ENCODE measurements at regions of chr17 and their contacts with region 1.

Region 1: GRCh38 chr17:74659898-74660297 is 36.4 kb upstream of the CD300E start:
- DNase-seq: no peak
- H3K4me3 ChIP-seq: no peak overlapping the region
- H3K27ac ChIP-seq: no peak overlapping the region
- H3K4me1 ChIP-seq: no peaks in the 10 kb centered on the region; a peak in 1 of 4 replicates
- H3K27me3 ChIP-seq: no peaks in the 10 kb centered on the region
- CTCF ChIP-seq: no peak
- EP300 ChIP-seq: no peak
- RAD21 ChIP-seq: no peak

Region 2: DNA sequence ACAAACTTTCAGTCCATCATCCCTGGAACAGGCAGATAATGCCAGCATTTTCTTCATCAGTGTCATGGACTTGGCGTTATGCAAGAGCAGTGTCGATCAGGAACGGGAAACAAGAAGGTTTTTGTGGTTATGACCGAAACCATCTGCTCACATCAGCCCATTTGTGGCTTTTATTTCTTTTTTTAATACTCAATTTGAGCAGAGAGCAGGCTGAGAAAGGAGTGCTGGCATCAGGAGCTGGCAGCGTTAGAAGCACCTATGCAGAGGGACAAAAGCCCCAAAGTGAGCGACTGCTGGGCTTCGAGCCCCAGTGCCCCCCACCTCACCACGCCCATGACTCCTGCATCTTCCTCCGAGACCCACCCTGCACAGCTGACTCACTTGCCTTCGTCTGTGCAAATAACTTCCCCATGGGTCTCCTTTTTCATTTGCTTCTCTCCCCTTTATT is 20.2 kb before region 1 on chr17:
- CTCF ChIA-PET with region 1: interaction called, 10 read pairs
- POLR2A ChIA-PET with region 1: no interaction called
- DNase-seq: no peak
- H3K4me3 ChIP-seq: no peak overlapping the region
- H3K27ac ChIP-seq: no peak overlapping the region
- H3K4me1 ChIP-seq: no peaks in the 10 kb centered on the region
- H3K27me3 ChIP-seq: no peaks in the 10 kb centered on the region
- CTCF ChIP-seq: no peak
- EP300 ChIP-seq: no peak
- RAD21 ChIP-seq: no peak

Region 3: GRCh38 chr17:74677558-74678466 is 17.9 kb after region 1 on chr17:
- CTCF ChIA-PET with region 1: interaction called, 80 read pairs
- POLR2A ChIA-PET with region 1: no interaction called
- DNase-seq: peak; percentile 77
- H3K4me3 ChIP-seq: no peak overlapping the region
- H3K27ac ChIP-seq: no peak overlapping the region; a peak in 1 of 4 replicates
- H3K4me1 ChIP-seq: peaks cover 0 to 8% of the 10 kb centered on the region in 2 experiments; a peak in 1 of 4 replicates
- H3K27me3 ChIP-seq: no peaks in the 10 kb centered on the region
- CTCF ChIP-seq: no peak
- EP300 ChIP-seq: no peak
- RAD21 ChIP-seq: no peak

Region 4: DNA sequence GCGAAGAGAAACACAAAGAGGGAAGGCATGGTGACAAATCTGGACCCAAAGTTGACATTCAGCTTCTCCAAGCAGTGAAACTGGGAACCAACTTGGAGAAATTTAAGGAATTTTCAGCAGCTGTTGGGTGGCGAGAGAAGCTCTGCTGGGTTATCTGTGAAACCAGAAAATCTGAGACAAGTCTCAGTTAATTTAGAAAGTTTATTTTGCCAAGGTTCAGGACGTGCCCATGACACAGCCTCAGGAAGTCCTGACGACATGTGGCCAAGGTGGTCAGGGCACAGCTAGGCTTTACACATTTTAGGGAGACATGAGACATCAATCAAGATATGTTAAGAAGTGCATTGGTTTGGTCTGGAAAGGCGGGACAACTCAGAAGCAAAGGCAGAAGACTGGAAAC is 64.0 kb after region 1 on chr17:
- CTCF ChIA-PET with region 1: interaction called, 26 read pairs
- POLR2A ChIA-PET with region 1: no interaction called
- DNase-seq: no peak
- H3K4me3 ChIP-seq: no peak overlapping the region
- H3K27ac ChIP-seq: no peak overlapping the region
- H3K4me1 ChIP-seq: no peaks in the 10 kb centered on the region
- H3K27me3 ChIP-seq: no peaks in the 10 kb centered on the region; the same call in 1 of the 2 replicates
- CTCF ChIP-seq: no peak
- EP300 ChIP-seq: no peak
- RAD21 ChIP-seq: no peak

Region 5: GRCh38 chr17:74748529-74749365 is 88.8 kb after region 1 on chr17 and contains the start of gene NHERF1:
- CTCF ChIA-PET with region 1: interaction called, 53 read pairs
- POLR2A ChIA-PET with region 1: no interaction called
- DNase-seq: peak; percentile 100
- H3K4me3 ChIP-seq: peak within 1 kb of the TSS; percentile 90 to 97
- H3K27ac ChIP-seq: peak within 1 kb of the TSS in 1 of 2 experiments; percentile 77; a peak in 2 of 4 replicates
- H3K4me1 ChIP-seq: peaks cover 0 to 29% of the 10 kb centered on the region in 2 experiments; a peak in 1 of 4 replicates
- H3K27me3 ChIP-seq: no peaks in the 10 kb centered on the region
- CTCF ChIP-seq: peak; percentile 36
- EP300 ChIP-seq: peak in 1 of 2 experiments; percentile 30; a peak in 1 of 4 replicates
- RAD21 ChIP-seq: peak; percentile 54
- polyA plus RNA-seq, gene NHERF1: 26.9 and 40.1 TPM in 2 replicates

Region 6: DNA sequence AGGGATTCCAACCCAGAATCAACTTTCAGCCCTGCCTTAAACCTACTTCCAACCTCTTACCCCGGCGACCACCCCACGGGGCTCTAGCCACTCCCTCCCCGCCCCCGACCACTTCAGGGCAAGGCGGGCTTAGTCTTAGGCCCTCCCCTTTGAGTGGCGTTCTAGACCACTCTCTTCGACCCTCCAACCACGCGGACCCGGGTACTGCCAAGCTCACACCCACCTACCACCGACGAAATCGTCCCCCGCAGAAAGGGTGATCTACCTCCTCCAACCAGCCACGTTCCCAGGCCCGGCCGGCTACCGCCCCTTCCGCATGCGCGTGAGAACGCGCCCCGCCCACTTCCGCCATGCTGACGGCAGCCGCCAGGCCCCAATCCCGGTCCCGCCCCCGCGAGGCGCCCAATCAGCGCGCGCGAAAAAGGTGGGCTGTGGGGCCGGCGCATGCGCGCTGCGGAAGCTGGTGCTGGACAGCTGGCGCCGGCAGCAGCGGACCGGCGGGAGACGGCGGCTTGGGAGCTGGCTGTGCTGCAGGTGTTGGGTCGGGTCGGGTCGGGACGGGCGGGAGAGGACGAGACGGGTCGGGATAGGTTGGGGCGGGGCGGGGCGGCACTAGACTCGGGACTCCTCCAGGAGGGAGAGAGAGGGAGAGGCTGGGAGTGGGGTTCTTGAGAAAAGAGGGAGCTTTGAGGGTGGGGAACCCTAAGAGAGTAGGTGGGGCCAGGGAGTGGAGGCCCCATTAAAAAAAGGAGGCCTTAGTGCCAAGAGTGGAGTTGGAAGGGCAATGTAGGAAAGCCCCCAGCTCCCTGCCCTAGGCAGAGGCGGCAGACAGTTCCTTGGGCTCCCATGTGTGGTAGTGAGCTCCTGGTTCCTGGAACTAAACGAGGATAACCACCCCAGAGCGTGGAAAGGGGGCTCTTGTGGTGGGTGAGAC is 116.4 kb after region 1 on chr17 and contains the start of gene NAT9:
- CTCF ChIA-PET with region 1: interaction called, 35 read pairs
- POLR2A ChIA-PET with region 1: no interaction called
- DNase-seq: peak; percentile 100
- H3K4me3 ChIP-seq: peak within 1 kb of the TSS; percentile 87 to 90
- H3K27ac ChIP-seq: peak within 1 kb of the TSS; percentile 72 to 81
- H3K4me1 ChIP-seq: peaks cover 13 to 16% of the 10 kb centered on the region in 2 experiments; a peak in 3 of 4 replicates
- H3K27me3 ChIP-seq: no peaks in the 10 kb centered on the region
- CTCF ChIP-seq: no peak
- EP300 ChIP-seq: no peak
- RAD21 ChIP-seq: no peak
- polyA plus RNA-seq, gene NAT9: 117 and 190 TPM in 2 replicates

Region 7: DNA sequence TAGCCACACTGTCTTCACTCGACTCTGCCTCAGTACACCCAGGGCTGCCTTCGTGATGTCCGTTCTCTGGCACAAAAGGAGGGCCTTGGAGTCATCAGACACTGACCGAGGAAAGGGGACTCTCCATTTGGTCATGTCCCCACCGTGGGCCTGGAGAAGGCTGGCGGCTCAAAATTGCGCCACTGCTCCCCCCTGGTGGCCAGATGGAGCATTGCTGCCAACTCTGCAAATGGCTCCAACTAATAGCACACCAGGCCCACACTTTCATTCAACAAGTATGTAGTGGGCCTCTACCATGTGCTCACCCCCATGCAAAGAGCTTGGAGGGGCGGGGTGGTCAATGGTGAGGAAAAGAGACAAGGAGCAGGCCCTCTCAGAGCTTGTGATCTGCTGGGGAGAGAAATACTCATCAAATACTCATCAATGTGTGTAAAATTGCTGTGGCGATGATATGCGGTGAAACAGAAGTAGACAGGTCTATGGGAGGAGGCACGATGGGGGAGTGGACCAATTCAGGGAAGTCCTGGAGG is 205.0 kb after region 1 on chr17:
- CTCF ChIA-PET with region 1: interaction called, 23 read pairs
- POLR2A ChIA-PET with region 1: no interaction called
- DNase-seq: peak; percentile 93
- H3K4me3 ChIP-seq: no peak overlapping the region; a peak in 1 of 4 replicates
- H3K27ac ChIP-seq: no peak overlapping the region
- H3K4me1 ChIP-seq: peaks cover 0 to 10% of the 10 kb centered on the region in 2 experiments; a peak in 2 of 4 replicates
- H3K27me3 ChIP-seq: peaks cover 18% of the 10 kb centered on the region
- CTCF ChIP-seq: peak; percentile 99
- EP300 ChIP-seq: no peak
- RAD21 ChIP-seq: peak; percentile 99

Measured in SK-N-SH (cell line).